T-cell (primary cell): ENCODE measurements at regions of chr3 and their contacts with region 1.

Region 1: DNA sequence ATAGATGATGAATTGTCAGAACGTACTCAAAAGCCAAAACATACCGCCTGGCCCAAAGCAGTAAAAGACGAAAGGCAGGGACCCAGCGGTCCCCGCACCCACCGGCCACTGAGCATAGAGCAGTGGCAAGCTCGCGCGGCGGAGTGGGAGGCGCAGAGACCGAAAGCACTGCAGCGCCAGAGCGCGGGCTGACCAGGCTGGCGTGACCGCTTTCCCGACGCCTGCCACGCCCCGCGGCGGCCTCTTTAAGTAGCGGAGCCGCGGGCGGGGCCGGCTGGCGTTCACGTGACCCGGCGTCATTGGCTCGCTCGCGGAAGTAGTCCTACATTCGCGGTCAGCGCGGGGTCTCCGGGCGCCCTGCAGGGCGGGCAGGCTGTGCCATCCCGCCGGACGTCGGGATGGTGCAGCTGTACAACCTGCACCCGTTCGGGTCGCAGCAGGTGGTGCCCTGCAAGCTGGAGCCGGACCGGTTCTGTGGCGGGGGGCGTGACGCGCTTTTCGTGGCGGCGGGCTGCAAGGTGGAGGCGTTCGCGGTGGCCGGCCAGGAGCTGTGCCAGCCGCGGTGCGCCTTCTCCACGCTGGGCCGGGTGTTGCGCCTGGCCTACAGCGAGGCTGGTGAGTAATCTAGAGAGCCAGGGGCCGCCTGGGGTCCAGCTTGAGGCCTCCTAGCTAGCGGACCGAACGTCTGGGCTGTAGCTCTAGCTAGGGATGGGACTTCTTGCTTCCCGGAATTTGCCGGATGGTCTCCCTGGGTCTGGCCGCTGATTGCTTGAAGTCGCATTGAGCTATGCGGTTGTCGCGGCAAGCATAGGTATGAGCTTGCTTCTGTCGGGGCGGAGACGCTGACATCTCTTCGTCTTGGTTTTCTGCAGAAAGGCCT is at the start of gene HPS3:
- DNase-seq: peak; percentile 53 to 89 (median 70)
- ATAC-seq: peak; percentile 89 to 93 (median 90)
- H3K4me3 ChIP-seq: peak within 1 kb of the TSS; percentile 97
- H3K4me3 Mint-ChIP-seq: peak within 1 kb of the TSS; percentile 90 to 99 (median 96)
- H3K27ac ChIP-seq: peak within 1 kb of the TSS; percentile 74
- H3K27ac Mint-ChIP-seq: peak within 1 kb of the TSS; percentile 68 to 85
- H3K4me1 ChIP-seq: peaks cover 15 to 17% of the 10 kb centered on the region in 2 experiments
- H3K4me1 Mint-ChIP-seq: peaks cover 48 to 49% (median 48%) of the 10 kb centered on the region in 3 donors
- H3K27me3 ChIP-seq: peaks cover 0 to 4% of the 10 kb centered on the region in 2 experiments
- H3K27me3 Mint-ChIP-seq: peaks cover 4 to 11% of the 10 kb centered on the region in 2 donors
- total RNA-seq, gene HPS3: 18.6 to 28.4 (median 21.5) TPM

Region 2: GRCh38 chr3:151093905-151094304 is 1964.3 kb after region 1 on chr3:
- CTCF ChIA-PET with region 1: no interaction called
- POLR2A ChIA-PET with region 1: interaction called in 1 of 2 experiments, 19 read pairs
- DNase-seq: no peak
- ATAC-seq: no peak
- H3K4me3 ChIP-seq: no peak overlapping the region
- H3K4me3 Mint-ChIP-seq: no peak overlapping the region
- H3K27ac ChIP-seq: no peak overlapping the region
- H3K27ac Mint-ChIP-seq: no peak overlapping the region
- H3K4me1 ChIP-seq: no peaks in the 10 kb centered on the region
- H3K4me1 Mint-ChIP-seq: no peaks in the 10 kb centered on the region
- H3K27me3 ChIP-seq: peaks cover 0 to 2% of the 10 kb centered on the region in 2 experiments
- H3K27me3 Mint-ChIP-seq: peaks cover 11 to 22% of the 10 kb centered on the region in 2 donors